Vagina (tissue), 2 donors: ENCODE measurements at regions of chr18 and their contacts with region 1.

Region 1: DNA sequence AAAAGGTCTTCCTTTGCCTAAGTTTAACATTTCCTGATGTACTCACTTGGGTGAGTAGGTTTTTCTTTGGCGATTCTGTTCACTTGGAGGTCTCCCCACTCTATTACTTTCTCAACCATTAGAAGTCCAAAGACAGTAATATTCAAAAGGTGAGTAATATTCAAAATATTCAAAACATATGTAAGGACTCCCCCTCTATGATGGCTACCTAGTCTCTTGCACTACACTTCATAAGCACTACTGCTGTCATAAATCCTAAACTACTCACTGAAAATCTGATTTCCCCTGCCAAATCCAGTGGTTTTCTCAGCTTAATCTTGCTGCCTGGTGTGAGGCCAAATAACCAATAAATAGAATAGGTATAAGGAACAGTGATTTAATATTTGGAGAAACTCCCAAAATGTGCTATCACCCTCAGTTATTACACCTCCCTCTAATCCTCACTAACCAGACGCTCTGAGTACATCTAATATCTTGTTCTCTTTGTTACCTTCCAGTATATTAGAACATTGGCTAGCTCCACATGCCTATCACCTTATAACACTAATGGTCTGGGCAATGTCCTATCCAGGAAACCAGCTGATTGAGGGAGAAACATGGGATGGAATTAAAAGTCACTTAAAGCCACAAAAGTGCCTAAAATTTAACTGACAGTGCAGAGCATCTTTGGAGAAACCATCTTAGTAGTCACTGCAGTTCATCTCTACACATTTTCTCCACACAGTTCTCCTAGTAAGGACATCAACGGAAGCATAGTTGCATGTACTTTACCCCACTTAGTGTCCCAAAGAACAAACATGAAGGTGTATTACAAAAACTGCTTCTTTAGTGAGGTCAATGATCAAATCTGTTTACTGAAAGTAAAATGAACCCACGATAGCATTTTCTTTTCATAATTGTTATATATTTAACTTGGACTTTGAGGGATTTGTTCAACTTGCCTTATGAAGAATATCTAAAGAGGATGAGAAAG is 54.8 kb downstream of the MBD2 start:
- DNase-seq: no peak
- H3K4me3 ChIP-seq: no peak overlapping the region
- H3K27ac ChIP-seq: no peak overlapping the region
- H3K4me1 ChIP-seq: no peaks in the 10 kb centered on the region
- H3K27me3 ChIP-seq: no peaks in the 10 kb centered on the region
- CTCF ChIP-seq: no peak
- POLR2A ChIP-seq: no peak

Region 2: GRCh38 chr18:54127759-54128378 is 41.8 kb before region 1 on chr18:
- intact Hi-C with region 1: no loop called
- DNase-seq: no peak
- H3K4me3 ChIP-seq: no peak overlapping the region
- H3K27ac ChIP-seq: no peak overlapping the region
- H3K4me1 ChIP-seq: no peaks in the 10 kb centered on the region
- H3K27me3 ChIP-seq: no peaks in the 10 kb centered on the region
- CTCF ChIP-seq: no peak
- POLR2A ChIP-seq: no peak

Region 3: GRCh38 chr18:54254265-54254770 is 84.6 kb after region 1 on chr18:
- intact Hi-C with region 1: no loop called
- DNase-seq: no peak
- H3K4me3 ChIP-seq: no peak overlapping the region
- H3K27ac ChIP-seq: no peak overlapping the region
- H3K4me1 ChIP-seq: no peaks in the 10 kb centered on the region
- H3K27me3 ChIP-seq: no peaks in the 10 kb centered on the region
- CTCF ChIP-seq: no peak
- POLR2A ChIP-seq: no peak

Region 4: GRCh38 chr18:54294274-54294673 is 124.6 kb after region 1 on chr18:
- intact Hi-C with region 1: loop called (anchors 5 kb)
- DNase-seq: no peak
- H3K4me3 ChIP-seq: no peak overlapping the region
- H3K27ac ChIP-seq: no peak overlapping the region
- H3K4me1 ChIP-seq: no peaks in the 10 kb centered on the region
- H3K27me3 ChIP-seq: no peaks in the 10 kb centered on the region
- CTCF ChIP-seq: no peak
- POLR2A ChIP-seq: no peak